Caco-2 (cell line): ENCODE measurements at regions of chr20 and their contacts with region 1.

Region 1: GRCh38 chr20:19451923-19452295 is 239.5 kb downstream of the SLC24A3 start:
- DNase-seq: no peak
- H3K4me3 ChIP-seq: no peak overlapping the region
- H3K4me3 Mint-ChIP-seq: no peak overlapping the region
- H3K27ac Mint-ChIP-seq: no peak overlapping the region
- H3K4me1 ChIP-seq: no peaks in the 10 kb centered on the region
- H3K4me1 Mint-ChIP-seq: no peaks in the 10 kb centered on the region
- H3K27me3 ChIP-seq: no peaks in the 10 kb centered on the region
- H3K27me3 Mint-ChIP-seq: peaks cover 5% of the 10 kb centered on the region
- CTCF ChIP-seq: no peak

Region 2: GRCh38 chr20:19522071-19522801 is 70.3 kb after region 1 on chr20:
- CTCF ChIA-PET with region 1: no interaction called
- POLR2A ChIA-PET with region 1: no interaction called
- intact Hi-C with region 1: loop called (anchors 10 kb)
- DNase-seq: no peak
- H3K4me3 ChIP-seq: no peak overlapping the region
- H3K4me3 Mint-ChIP-seq: no peak overlapping the region
- H3K27ac Mint-ChIP-seq: no peak overlapping the region
- H3K4me1 ChIP-seq: no peaks in the 10 kb centered on the region
- H3K4me1 Mint-ChIP-seq: no peaks in the 10 kb centered on the region
- H3K27me3 ChIP-seq: no peaks in the 10 kb centered on the region
- H3K27me3 Mint-ChIP-seq: peaks cover 22% of the 10 kb centered on the region
- CTCF ChIP-seq: no peak